ENCODE measurements at regions of chr12 and their contacts with region 1.

Region 1: DNA sequence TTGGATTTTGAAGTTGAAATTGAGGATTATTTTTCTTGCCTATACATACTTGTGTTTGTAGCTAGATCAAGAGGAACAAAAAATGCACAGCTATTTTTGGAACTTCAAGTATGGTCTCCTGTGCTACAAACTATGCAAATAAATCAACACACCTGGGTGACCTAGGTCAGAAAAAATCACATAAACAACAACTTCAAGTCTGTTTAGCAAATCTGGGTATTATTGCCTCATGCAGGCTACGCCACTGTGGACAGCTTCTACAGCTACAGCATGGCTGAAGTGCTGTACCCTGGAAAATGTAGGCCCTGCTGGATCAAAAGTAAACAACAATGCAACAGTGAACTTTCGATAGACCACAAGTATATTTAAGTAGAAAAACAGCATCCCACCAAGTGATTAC is 87.4 kb downstream of the SLC6A15 start:
- DNase-seq: no peak
- ATAC-seq: no peak
- H3K4me3 ChIP-seq: no peak overlapping the region
- H3K27ac ChIP-seq: no peak overlapping the region
- H3K4me1 ChIP-seq: no peaks in the 10 kb centered on the region
- H3K27me3 ChIP-seq: no peaks in the 10 kb centered on the region
- CTCF ChIP-seq: no peak
- POLR2A ChIP-seq: no peak
- RAD21 ChIP-seq: no peak

Region 2: GRCh38 chr12:84696908-84697540 is 128.1 kb before region 1 on chr12:
- CTCF ChIA-PET with region 1: no interaction called
- POLR2A ChIA-PET with region 1: no interaction called
- dilution Hi-C with region 1: no loop called
- in situ Hi-C with region 1: no loop called
- intact Hi-C with region 1: no loop called
- DNase-seq: no peak
- ATAC-seq: no peak
- H3K4me3 ChIP-seq: no peak overlapping the region
- H3K27ac ChIP-seq: no peak overlapping the region
- H3K4me1 ChIP-seq: no peaks in the 10 kb centered on the region
- H3K27me3 ChIP-seq: no peaks in the 10 kb centered on the region
- CTCF ChIP-seq: no peak
- POLR2A ChIP-seq: no peak
- RAD21 ChIP-seq: no peak

Region 3: GRCh38 chr12:84793558-84794296 is 31.4 kb before region 1 on chr12:
- CTCF ChIA-PET with region 1: no interaction called
- POLR2A ChIA-PET with region 1: no interaction called
- dilution Hi-C with region 1: no loop called
- in situ Hi-C with region 1: no loop called
- intact Hi-C with region 1: no loop called
- DNase-seq: peak; percentile 23
- ATAC-seq: no peak
- H3K4me3 ChIP-seq: no peak overlapping the region
- H3K27ac ChIP-seq: no peak overlapping the region
- H3K4me1 ChIP-seq: no peaks in the 10 kb centered on the region
- H3K27me3 ChIP-seq: no peaks in the 10 kb centered on the region
- CTCF ChIP-seq: no peak
- POLR2A ChIP-seq: no peak
- RAD21 ChIP-seq: no peak

Region 4: DNA sequence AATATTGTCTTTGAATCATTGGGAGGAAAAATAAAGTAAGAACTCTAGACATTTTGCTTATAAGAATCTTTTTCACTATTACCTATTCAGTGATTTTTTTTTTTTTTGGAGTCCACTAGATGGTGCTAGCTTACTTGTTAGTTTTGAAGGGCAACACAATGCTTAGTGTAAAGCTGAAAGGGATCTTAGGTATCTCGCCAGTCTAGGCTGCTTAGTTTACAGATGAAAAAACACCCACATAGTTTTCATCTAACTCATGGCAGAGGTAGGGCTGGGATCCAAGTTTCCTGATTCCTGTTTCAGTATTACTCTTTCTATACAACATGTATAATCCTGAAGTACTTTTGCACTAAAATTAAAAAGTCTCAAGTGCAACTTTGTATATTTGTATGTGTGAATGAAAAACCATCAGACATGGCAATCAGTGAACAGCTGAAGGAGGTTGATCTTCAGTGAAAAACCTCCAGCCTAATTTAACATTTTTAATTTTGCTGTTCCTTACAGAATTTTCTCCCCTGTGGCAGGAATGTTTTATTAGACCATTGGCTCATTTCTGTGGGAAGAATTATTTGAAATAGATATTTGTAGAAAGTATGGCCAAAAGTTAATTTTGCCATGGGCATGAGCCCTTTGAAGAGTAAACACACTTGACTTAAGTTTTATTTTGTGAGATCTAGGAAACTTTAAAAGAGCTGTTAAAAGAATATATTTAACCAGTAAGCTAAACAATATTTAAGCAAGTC is 251.7 kb after region 1 on chr12:
- CTCF ChIA-PET with region 1: no interaction called
- POLR2A ChIA-PET with region 1: interaction called, 11 read pairs
- dilution Hi-C with region 1: no loop called
- in situ Hi-C with region 1: no loop called
- intact Hi-C with region 1: no loop called
- DNase-seq: peak; percentile 92
- ATAC-seq: peak; percentile 97
- H3K4me3 ChIP-seq: no peak overlapping the region
- H3K27ac ChIP-seq: no peak overlapping the region
- H3K4me1 ChIP-seq: no peaks in the 10 kb centered on the region
- H3K27me3 ChIP-seq: no peaks in the 10 kb centered on the region
- CTCF ChIP-seq: peak; percentile 55
- POLR2A ChIP-seq: no peak
- RAD21 ChIP-seq: peak; percentile 48